ENCODE measurements at regions of chr19 and their contacts with region 1.

Region 1: DNA sequence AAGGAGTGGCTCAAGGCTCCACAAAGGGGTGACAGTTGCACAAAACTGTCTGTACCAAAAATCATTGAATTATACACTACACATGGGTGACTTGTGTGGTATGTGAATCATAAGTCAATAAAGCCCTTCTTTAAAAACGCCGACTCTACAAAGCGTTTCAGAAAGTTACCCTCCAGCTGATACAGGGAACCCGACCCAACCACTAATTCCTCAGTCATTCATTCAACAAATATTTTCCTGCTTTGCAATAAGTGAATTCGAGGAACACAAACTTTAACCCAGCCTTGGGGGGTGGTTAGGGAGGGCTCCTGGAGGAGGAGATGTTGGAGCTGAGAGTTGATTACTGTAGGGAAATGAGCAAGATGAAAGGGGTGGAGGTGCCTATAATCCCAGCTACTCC is 32.0 kb downstream of the LTBP4 start:
- DNase-seq: peak; percentile 1

Region 2: DNA sequence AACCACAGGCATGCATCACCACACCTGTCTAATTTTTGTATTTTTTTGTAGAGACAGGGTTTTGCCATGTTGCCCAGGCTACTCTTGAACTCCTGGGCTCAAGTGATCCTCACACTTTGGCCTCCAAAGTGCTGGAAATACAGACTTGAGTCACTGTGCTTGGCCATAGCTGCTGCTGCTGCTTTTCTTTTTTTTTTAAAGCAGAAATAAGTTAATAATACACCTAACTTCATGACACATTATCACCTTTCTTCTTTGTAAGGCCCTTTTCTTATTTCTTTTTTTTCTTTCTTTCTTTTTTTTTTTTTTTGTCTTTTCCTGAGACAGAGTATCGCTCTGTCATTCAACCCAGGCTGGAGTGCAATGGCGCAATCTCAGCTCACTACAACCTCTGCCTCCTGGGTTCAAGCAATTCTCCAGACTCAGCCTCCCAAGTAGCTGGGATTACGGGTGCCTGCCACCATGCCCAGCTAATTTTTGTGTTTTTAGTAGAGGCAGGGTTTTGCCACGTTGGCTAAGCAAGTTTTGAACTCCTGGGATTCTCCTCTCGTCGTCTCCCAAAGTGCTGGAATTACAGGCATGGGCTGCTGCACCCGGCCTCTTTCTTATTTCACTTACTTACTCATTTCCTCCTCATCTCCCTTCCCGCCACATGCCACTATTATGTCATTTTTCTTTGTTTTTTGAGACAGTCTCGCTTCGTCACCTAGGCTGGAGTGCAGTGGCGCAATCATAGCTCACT is 47.8 kb before region 1 on chr19:
- CTCF ChIA-PET with region 1: no interaction called
- POLR2A ChIA-PET with region 1: no interaction called
- DNase-seq: no peak

Region 3: DNA sequence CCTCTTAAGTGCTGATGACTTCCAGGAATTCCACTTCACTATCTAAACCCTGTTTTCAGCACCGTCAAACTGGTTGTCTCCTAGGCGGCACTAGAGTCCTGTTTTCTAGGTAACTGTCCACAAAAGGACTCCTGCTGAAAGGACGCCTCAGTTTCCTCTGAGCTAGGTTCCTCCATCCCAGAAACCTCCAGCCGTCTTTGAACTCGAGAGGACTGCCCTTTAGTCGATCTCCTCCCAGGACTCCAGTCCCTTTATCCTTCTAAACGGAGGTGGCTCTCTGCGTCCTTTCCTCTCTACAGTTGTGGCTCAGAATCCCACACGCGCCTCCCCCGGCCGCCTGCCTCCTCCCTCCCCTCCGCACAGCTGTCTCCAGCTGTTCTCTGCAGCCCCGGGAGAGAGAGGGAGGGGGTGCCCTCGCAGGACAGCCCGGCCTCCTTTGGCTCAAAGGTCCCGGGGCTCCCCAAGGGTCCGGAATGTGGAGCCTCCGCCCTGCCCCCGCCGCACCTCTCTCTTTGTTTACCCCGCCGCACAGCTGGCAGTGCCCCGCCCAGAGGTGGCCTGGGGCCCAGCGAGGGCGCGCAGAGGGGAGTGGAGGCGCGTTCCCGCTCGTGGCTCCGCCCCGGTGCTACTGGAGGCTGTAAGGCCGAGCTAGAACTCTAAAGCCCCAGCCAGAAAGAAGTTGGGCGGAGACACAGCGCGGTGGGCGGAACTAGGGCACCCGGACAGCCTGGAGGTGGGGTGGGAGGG is 29.6 kb before region 1 on chr19:
- CTCF ChIA-PET with region 1: interaction called, 19 read pairs
- POLR2A ChIA-PET with region 1: interaction called, 4 read pairs
- DNase-seq: peak; percentile 89

Region 4: GRCh38 chr19:40646564-40647254 is 13.5 kb after region 1 on chr19:
- CTCF ChIA-PET with region 1: interaction called, 34 read pairs
- POLR2A ChIA-PET with region 1: no interaction called
- DNase-seq: no peak